H1 (cell line): ENCODE measurements at regions of chr18 and their contacts with region 1.

Region 1: DNA sequence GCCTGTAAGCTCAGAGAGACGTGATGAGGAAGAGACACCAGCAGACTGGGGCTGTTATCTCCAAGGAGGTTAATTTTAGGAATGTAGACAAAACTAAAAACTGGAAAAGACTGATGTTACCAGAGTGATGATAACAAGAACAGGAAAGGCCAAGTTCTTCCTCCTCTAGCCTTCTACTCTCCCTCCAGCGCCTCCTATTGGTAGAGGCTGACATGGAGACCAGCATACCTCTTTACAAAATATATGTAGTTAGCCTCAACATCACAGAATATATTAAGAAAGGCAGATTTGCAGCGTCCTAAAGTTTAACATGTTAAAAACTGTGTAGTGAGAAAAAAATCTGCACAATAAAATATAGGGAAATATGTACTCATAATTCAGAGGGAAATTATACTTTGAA is 66.0 kb downstream of the TCF4 start:
- DNase-seq: peak in 1 of 2 experiments; percentile 82
- H3K4me3 ChIP-seq: no peak overlapping the region
- H3K27ac ChIP-seq: no peak overlapping the region
- H3K4me1 ChIP-seq: peaks cover 0 to 8% (median 5%) of the 10 kb centered on the region in 4 experiments; a peak in 3 of 7 replicates
- H3K27me3 ChIP-seq: peaks cover 0 to 1% (median 0%) of the 10 kb centered on the region in 4 experiments; a peak in 1 of 7 replicates
- CTCF ChIP-seq: peak in 2 of 3 experiments; percentile 65 to 78; a peak in 3 of 4 replicates
- EP300 ChIP-seq: no peak
- POLR2A ChIP-seq: no peak
- RAD21 ChIP-seq: peak; percentile 61 to 69

Region 2: GRCh38 chr18:55415258-55415871 is 106.6 kb before region 1 on chr18:
- CTCF ChIA-PET with region 1: interaction called, 11 read pairs
- POLR2A ChIA-PET with region 1: no interaction called
- DNase-seq: peak; percentile 53 to 89
- H3K4me3 ChIP-seq: no peak overlapping the region
- H3K27ac ChIP-seq: no peak overlapping the region
- H3K4me1 ChIP-seq: peaks cover 1 to 10% (median 5%) of the 10 kb centered on the region in 4 experiments; a peak in 5 of 7 replicates
- H3K27me3 ChIP-seq: no peaks in the 10 kb centered on the region
- CTCF ChIP-seq: peak; percentile 74 to 82 (median 78)
- EP300 ChIP-seq: no peak
- POLR2A ChIP-seq: no peak
- RAD21 ChIP-seq: peak; percentile 92 to 94